ENCODE measurements at regions of chr17 and their contacts with region 1.

Region 1: DNA sequence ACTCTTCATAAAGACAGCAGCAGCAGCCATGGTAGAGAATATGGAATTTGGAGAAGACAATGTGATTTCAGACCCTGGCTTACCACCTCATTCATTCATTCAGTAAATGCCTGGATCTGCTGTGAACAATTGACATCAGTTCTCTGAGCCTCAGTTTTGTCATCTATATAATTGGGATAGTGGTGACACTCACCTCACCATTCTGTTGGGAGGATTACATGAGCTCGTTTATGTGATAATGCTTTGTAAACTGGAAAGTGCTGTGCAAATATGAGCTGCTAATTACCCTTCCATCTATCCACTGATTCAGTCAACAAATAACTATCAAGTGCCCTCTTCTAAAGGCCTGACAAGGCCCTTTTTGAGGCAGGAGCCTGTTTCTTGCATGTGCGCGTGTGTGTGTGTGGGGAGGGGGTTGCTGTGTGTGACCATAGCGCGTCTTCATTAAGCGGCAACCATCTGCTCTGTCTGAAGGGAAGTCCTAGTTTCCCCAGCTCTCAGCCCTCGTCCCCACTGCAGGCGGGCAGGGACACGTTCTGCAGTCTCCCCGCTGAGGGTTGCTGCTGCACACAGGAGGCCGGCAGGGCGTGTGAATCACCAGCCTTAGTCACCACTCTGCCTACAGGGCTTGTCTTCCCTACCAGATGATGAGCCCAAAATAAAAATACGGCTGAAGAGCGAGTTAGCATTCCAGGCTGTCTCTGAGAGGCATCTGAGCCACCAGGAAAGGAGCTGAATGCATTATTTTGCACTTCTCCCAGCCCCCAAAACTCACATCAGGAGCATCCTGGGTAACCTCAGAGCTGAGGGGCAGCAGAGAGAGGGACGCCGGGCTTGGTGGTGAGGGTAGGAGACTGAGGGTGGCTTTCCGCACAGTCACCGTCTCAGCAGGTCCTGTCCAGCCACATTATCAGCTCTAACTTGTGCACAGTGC is 19.9 kb downstream of the ARL4D start:
- DNase-seq: peak in 9 of 10 donors; percentile 49 to 91 (median 78)
- H3K4me3 ChIP-seq: peak overlapping the region in 5 of 59 donors; percentile 3 to 21 (median 6)
- H3K27ac ChIP-seq: peak overlapping the region in 57 of 59 donors; percentile 12 to 89 (median 72)
- H3K27me3 ChIP-seq: no peaks in the 10 kb centered on the region
- CTCF ChIP-seq: no peak

Region 2: GRCh38 chr17:43406676-43407645 is 11.7 kb before region 1 on chr17:
- intact Hi-C with region 1: loop called in 1 of 2 experiments (anchors 1 kb)
- DNase-seq: peak in 8 of 10 donors; percentile 23 to 88 (median 72)
- H3K4me3 ChIP-seq: no peak overlapping the region
- H3K27ac ChIP-seq: peak overlapping the region in 6 of 59 donors; percentile 3 to 44 (median 32)
- H3K27me3 ChIP-seq: no peaks in the 10 kb centered on the region
- CTCF ChIP-seq: peak in 1 of 56 donors; percentile 7

Region 3: GRCh38 chr17:43449470-43450248 is 31.0 kb after region 1 on chr17:
- intact Hi-C with region 1: no loop called
- DNase-seq: no peak
- H3K4me3 ChIP-seq: no peak overlapping the region
- H3K27ac ChIP-seq: no peak overlapping the region
- H3K27me3 ChIP-seq: no peaks in the 10 kb centered on the region
- CTCF ChIP-seq: no peak

Region 4: GRCh38 chr17:43467981-43468581 is 49.4 kb after region 1 on chr17:
- intact Hi-C with region 1: loop called (anchors 5 kb)
- DNase-seq: peak in 8 of 10 donors; percentile 25 to 68 (median 52)
- H3K4me3 ChIP-seq: no peak overlapping the region
- H3K27ac ChIP-seq: peak overlapping the region in 12 of 59 donors; percentile 0 to 57 (median 28)
- H3K27me3 ChIP-seq: no peaks in the 10 kb centered on the region
- CTCF ChIP-seq: no peak